CD8-positive, alpha-beta T cell (primary cell): ENCODE measurements at regions of chr2 and their contacts with region 1.

Region 1: GRCh38 chr2:99180755-99181623 is at the starts of genes MITD1 and MRPL30:
- DNase-seq: peak; percentile 83 to 97 (median 91)
- ATAC-seq: peak; percentile 94
- H3K4me3 ChIP-seq: peak within 1 kb of the TSS; percentile 84 to 90
- H3K4me3 Mint-ChIP-seq: peak within 1 kb of the TSS; percentile 96
- H3K27ac ChIP-seq: peak within 1 kb of the TSS; percentile 85 to 88
- H3K27ac Mint-ChIP-seq: peak within 1 kb of the TSS; percentile 97
- H3K4me1 ChIP-seq: peaks cover 36% of the 10 kb centered on the region
- H3K4me1 Mint-ChIP-seq: peaks cover 69% of the 10 kb centered on the region
- H3K27me3 ChIP-seq: no peaks in the 10 kb centered on the region
- H3K27me3 Mint-ChIP-seq: no peaks in the 10 kb centered on the region
- CTCF ChIP-seq: no peak
- total RNA-seq, gene MITD1: 12.6 to 15.6 TPM
- total RNA-seq, gene MRPL30: 9.4 to 11.4 TPM

Region 2: GRCh38 chr2:98608116-98608999 is 572.6 kb before region 1 on chr2 and contains the starts of genes COA5 and UNC50:
- CTCF ChIA-PET with region 1: no interaction called
- POLR2A ChIA-PET with region 1: no interaction called
- intact Hi-C with region 1: loop called (anchors 2 to 5 kb)
- DNase-seq: peak; percentile 84 to 95 (median 89)
- ATAC-seq: peak; percentile 81
- H3K4me3 ChIP-seq: peak within 1 kb of the TSS; percentile 84 to 94
- H3K4me3 Mint-ChIP-seq: peak within 1 kb of the TSS; percentile 89
- H3K27ac ChIP-seq: peak within 1 kb of the TSS; percentile 87 to 95
- H3K27ac Mint-ChIP-seq: peak within 1 kb of the TSS; percentile 95
- H3K4me1 ChIP-seq: peaks cover 48% of the 10 kb centered on the region
- H3K4me1 Mint-ChIP-seq: peaks cover 74% of the 10 kb centered on the region
- H3K27me3 ChIP-seq: no peaks in the 10 kb centered on the region
- H3K27me3 Mint-ChIP-seq: no peaks in the 10 kb centered on the region
- CTCF ChIP-seq: no peak
- total RNA-seq, gene COA5: 19.7 to 24.1 TPM
- total RNA-seq, gene UNC50: 12.5 to 14.4 TPM

Region 3: DNA sequence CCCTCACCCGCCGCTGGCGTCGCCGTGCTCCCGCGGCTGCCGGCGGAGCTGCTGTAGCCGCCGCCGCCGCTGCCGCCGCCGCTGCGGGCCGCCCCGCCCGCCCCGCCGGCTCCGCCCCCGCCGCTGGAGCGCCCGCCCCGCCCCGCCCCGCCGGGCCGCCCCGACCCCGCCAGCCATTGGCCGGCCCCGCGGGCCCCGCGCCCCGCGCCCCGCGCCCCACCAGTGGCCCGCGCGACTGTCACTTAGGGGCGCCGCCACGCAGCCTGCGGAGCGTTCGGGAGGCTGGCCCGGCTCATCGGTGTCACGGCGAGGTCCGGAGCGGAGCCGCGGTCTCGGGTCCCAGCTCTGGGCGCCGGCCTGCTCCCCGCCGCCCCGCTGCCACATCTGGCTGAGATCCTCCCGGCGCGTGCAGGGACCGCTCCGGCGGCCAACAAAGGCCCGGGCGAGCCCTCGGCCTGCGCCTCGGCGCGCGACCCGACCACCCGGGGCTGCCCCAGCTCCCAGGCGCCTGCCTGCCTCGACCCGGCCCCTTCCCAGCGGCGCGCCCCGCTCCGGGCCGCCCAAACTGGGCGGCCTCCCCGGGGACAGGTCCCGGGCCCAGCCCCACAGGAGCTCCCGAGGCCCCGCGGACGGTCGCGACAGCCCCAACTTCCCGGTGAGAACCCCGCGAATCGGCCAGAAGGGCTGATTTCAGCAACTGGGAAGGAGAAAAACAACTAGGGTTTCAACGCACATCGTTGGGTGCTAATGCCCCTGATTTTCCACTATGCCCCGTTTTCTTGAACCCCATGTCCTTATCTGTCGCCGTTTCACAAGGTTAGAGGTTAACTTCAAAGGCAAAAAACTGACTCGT is 449.7 kb before region 1 on chr2 and contains the start of gene MGAT4A:
- CTCF ChIA-PET with region 1: no interaction called
- POLR2A ChIA-PET with region 1: no interaction called
- intact Hi-C with region 1: loop called in 1 of 2 experiments (anchors 2 kb)
- DNase-seq: peak; percentile 62 to 90 (median 82)
- ATAC-seq: peak; percentile 76
- H3K4me3 ChIP-seq: peak within 1 kb of the TSS; percentile 80 to 93
- H3K4me3 Mint-ChIP-seq: peak within 1 kb of the TSS; percentile 93
- H3K27ac ChIP-seq: peak within 1 kb of the TSS; percentile 82 to 83
- H3K27ac Mint-ChIP-seq: peak within 1 kb of the TSS; percentile 97
- H3K4me1 ChIP-seq: peaks cover 49% of the 10 kb centered on the region
- H3K4me1 Mint-ChIP-seq: peaks cover 59% of the 10 kb centered on the region
- H3K27me3 ChIP-seq: no peaks in the 10 kb centered on the region
- H3K27me3 Mint-ChIP-seq: no peaks in the 10 kb centered on the region
- CTCF ChIP-seq: no peak
- total RNA-seq, gene MGAT4A: 226 to 229 TPM

Region 4: DNA sequence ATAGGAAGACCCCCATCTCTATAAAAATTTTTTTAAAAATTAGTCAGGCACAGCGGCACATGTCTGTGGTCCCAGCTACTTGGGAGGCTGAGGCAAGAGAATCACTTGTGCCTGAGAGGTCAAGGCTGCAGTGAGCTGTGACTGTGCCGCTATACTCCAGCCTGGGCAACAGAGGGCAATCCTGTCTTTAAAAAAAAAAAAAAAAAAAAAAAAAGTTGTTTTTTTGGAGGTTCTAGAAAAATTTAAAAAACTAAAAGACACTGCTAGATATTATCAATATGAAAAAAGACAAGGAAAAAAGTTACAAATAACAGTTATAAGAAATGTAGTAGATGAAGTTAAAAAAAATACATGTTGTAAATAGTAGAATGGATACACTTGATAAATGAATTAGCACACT is 95.6 kb before region 1 on chr2:
- CTCF ChIA-PET with region 1: no interaction called
- POLR2A ChIA-PET with region 1: no interaction called
- intact Hi-C with region 1: loop called in 1 of 2 experiments (anchors 2 kb)
- DNase-seq: peak in 5 of 9 experiments; percentile 2 to 37 (median 23)
- ATAC-seq: no peak
- H3K4me3 ChIP-seq: no peak overlapping the region
- H3K4me3 Mint-ChIP-seq: no peak overlapping the region
- H3K27ac ChIP-seq: no peak overlapping the region
- H3K27ac Mint-ChIP-seq: no peak overlapping the region
- H3K4me1 ChIP-seq: peaks cover 7% of the 10 kb centered on the region
- H3K4me1 Mint-ChIP-seq: peaks cover 8% of the 10 kb centered on the region
- H3K27me3 ChIP-seq: no peaks in the 10 kb centered on the region
- H3K27me3 Mint-ChIP-seq: peaks cover 3% of the 10 kb centered on the region
- CTCF ChIP-seq: peak; percentile 44

Region 5: DNA sequence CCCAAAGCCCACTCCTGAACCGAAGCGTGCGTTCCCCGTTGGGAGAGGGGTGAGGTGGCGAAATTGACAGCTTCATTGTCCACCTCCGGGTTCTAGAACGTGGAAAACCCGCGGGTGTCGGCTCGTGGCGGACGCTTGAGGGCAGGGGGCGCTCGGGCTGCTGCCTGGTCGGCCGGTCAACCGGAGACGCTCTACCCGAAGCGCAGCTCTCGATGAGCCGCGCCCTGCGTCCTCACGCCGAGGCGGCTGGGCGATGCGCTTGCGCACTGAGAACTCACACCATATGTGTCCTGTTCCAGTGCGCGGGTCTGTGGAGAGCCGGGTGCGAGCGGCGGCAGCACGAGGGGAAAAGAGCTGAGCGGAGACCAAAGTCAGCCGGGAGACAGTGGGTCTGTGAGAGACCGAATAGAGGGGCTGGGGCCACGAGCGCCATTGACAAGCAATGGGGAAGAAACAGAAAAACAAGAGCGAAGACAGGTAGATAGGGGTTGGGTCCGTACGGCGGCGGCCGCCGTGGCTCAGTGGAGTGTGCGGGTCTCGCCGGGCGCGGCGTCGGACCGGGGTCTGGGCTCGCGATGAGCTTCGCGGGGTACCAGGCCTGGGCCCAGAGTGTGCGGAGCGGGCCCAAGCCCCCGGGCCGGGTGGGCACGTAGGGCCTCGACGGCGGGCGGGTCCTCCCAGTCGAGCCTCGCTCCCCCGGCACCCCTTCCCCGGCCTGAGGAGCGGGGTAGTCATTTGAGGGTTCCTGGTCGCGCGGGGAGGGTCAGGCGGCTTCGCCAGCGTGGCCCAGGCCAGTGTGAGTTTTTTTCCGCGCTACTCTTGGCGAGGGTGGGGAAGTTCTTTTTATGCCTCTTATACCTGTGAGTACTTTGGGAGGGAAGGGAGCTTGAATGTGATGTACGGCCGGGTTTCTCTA is 156.4 kb after region 1 on chr2 and contains the start of gene EIF5B:
- CTCF ChIA-PET with region 1: interaction called, 5 read pairs
- POLR2A ChIA-PET with region 1: interaction called, 3 read pairs
- intact Hi-C with region 1: loop called (anchors 1 kb)
- DNase-seq: peak; percentile 85 to 97 (median 93)
- ATAC-seq: peak; percentile 62
- H3K4me3 ChIP-seq: peak within 1 kb of the TSS; percentile 76 to 79
- H3K4me3 Mint-ChIP-seq: no peak within 1 kb of the TSS
- H3K27ac ChIP-seq: peak within 1 kb of the TSS; percentile 76 to 89
- H3K27ac Mint-ChIP-seq: no peak within 1 kb of the TSS
- H3K4me1 ChIP-seq: peaks cover 30% of the 10 kb centered on the region
- H3K4me1 Mint-ChIP-seq: peaks cover 42% of the 10 kb centered on the region
- H3K27me3 ChIP-seq: no peaks in the 10 kb centered on the region
- H3K27me3 Mint-ChIP-seq: no peaks in the 10 kb centered on the region
- CTCF ChIP-seq: no peak
- total RNA-seq, gene EIF5B: 29.2 to 30.4 TPM